Activated CD4-positive, alpha-beta T cell treated with anti-CD3 and anti-CD28 coated beads, Interleukin-2, amount 10 ng/mL, durations not matched to agents 24 days and 14 days (primary cell): ENCODE measurements at regions of chr9 and their contacts with region 1.

Region 1: GRCh38 chr9:27732494-27732893 is 159.2 kb upstream of the C9orf72 start:
- DNase-seq: peak; percentile 61
- H3K4me3 Mint-ChIP-seq: peak overlapping the region; percentile 24
- H3K27ac Mint-ChIP-seq: peak overlapping the region; percentile 71
- H3K4me1 Mint-ChIP-seq: peaks cover 22% of the 10 kb centered on the region
- H3K27me3 Mint-ChIP-seq: no peaks in the 10 kb centered on the region

Region 2: GRCh38 chr9:27765266-27766072 is 33.0 kb after region 1 on chr9:
- intact Hi-C with region 1: loop called (anchors 1 kb)
- DNase-seq: no peak
- H3K4me3 Mint-ChIP-seq: no peak overlapping the region
- H3K27ac Mint-ChIP-seq: no peak overlapping the region
- H3K4me1 Mint-ChIP-seq: peaks cover 9% of the 10 kb centered on the region
- H3K27me3 Mint-ChIP-seq: peaks cover 6% of the 10 kb centered on the region

Region 3: DNA sequence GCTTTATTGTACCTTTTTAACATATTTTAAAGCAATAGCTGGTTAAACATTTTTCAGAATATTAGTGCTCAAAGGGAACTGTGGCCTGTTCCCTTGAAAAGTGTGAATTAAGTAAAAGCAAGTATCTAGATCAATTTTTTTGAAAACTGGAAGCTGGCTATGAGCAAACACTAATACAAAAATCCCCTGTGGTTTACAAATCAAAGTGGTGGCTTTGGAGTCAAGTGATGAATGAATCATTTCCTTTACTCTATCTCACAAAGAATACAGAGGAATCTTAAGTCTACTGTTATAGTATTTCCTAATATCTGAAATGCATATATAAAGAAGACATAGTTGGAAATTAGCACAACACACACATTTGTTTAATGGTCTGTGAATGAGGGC is 53.2 kb after region 1 on chr9:
- intact Hi-C with region 1: loop called (anchors 1 kb)
- DNase-seq: peak; percentile 60
- H3K4me3 Mint-ChIP-seq: peak overlapping the region; percentile 46
- H3K27ac Mint-ChIP-seq: peak overlapping the region; percentile 85
- H3K4me1 Mint-ChIP-seq: peaks cover 15% of the 10 kb centered on the region
- H3K27me3 Mint-ChIP-seq: peaks cover 11% of the 10 kb centered on the region